ENCODE measurements at regions of chr12 and their contacts with region 1.

Region 1: DNA sequence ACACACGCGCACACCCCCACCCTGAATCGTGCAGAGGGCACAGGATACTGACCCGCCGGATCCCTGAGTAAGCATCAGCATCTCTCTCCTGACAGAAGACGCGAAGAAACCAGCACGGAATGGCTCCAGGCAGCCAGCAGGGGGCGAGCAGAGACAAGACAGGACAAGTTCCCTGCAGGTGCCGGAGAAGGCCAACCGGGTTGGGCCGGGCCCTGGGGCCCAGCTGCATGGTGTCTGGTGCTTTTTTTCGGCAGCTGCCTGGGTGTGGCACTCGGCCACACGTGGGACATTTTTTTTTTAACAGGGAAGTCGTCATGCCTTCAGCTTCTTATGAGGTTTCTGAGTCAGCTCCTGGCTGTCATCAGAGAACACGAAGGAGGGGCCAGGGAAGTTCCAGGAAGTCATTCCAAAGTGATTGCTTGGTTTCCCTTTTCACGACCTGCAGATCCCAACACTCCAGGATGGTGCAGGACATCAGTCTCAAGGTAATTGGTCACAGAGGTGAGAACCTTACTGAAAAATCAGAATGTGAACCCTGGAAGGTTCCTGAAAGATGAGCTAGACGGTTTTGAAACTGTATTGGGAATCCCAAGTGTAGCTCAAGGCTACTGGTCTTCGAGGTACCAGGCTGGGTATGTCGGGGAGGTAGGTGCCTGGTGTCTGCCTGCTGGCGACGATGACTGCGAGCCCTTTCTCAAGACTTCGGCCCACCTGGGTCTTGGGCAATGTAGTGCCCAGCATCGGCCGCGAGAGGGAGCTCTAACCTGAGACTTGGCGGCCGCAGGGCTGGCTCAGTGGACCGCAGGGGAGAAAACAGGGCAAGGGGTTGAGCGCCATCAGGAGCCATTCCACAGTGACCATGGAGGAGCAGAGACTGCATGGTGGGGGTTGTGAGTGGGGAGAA is 190.8 kb upstream of the PRMT8 start:
- DNase-seq: peak; percentile 95
- H3K4me3 ChIP-seq: peak overlapping the region in 1 of 4 donors; percentile 9
- H3K27ac ChIP-seq: peak overlapping the region in 1 of 4 donors; percentile 54
- H3K4me1 ChIP-seq: peaks cover 0 to 11% (median 10%) of the 10 kb centered on the region in 4 donors
- H3K27me3 ChIP-seq: peaks cover 0 to 37% (median 0%) of the 10 kb centered on the region in 3 donors
- CTCF ChIP-seq: peak; percentile 87 to 92 (median 88)
- EP300 ChIP-seq: no peak
- POLR2A ChIP-seq: no peak

Region 2: GRCh38 chr12:2520722-2521246 is 779.4 kb before region 1 on chr12:
- intact Hi-C with region 1: no loop called
- DNase-seq: no peak
- H3K4me3 ChIP-seq: no peak overlapping the region
- H3K27ac ChIP-seq: no peak overlapping the region
- H3K4me1 ChIP-seq: no peaks in the 10 kb centered on the region
- H3K27me3 ChIP-seq: no peaks in the 10 kb centered on the region
- CTCF ChIP-seq: no peak
- EP300 ChIP-seq: no peak
- POLR2A ChIP-seq: no peak

Region 3: DNA sequence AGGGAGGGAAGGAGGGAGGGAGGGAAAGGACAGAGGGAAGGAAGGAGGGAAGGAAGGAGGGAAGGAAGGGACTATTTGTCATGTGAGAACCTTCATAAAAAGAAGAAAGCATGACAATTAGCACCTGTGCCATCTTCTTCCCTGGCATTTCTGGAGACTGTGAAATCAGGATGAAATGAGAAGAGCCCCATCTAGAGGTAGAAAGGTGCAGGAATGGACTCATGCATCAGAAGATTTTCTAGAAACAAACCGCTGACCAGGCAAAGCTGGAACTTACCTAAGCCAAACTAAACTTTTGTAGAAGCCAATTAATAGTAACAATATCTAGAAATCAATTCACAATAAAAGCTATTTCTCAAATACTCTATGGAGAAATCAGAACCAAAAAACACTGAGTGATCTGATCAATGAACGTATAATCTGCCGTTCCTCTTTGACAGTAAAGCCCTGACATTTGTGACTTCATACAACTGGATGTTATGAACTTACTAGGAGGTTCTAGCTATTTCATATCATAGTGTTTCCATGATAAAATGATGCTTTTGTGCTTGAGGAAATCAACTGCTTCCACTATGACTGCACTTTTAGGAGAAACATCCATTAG is 477.1 kb after region 1 on chr12:
- intact Hi-C with region 1: loop called (anchors 1 kb)
- DNase-seq: no peak
- H3K4me3 ChIP-seq: no peak overlapping the region
- H3K27ac ChIP-seq: no peak overlapping the region
- H3K4me1 ChIP-seq: no peaks in the 10 kb centered on the region
- H3K27me3 ChIP-seq: no peaks in the 10 kb centered on the region
- CTCF ChIP-seq: peak; percentile 34 to 68 (median 58)
- EP300 ChIP-seq: no peak
- POLR2A ChIP-seq: no peak

Region 4: DNA sequence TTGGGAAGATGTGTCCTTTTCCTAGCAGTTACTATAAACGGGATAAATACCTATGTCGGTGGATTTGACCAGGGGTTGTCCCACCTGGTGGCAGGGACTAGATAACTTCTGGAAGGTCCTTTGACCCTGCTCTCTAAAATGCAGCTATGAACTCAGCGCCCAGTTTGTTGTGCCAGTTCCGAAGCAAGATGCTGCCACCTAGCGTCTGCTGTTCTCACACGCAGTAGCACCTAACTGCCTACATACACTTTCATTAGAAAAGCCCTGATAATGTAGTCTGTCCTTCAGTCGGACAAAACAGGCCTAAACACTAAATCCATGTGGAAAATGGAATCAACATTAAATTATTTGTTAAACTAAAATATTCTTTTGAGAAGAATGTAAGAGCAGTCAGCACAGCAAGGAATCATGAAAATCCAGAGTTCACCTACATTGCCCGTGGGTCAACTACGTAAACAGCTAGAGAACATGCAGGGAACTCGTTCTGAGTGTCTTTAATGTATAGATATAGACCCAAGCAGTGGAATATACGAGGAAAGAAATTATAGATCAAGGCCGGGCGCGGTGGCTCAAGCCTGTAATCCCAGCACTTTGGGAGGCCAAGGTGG is 503.8 kb after region 1 on chr12:
- intact Hi-C with region 1: loop called (anchors 1 kb)
- DNase-seq: peak; percentile 81
- H3K4me3 ChIP-seq: no peak overlapping the region
- H3K27ac ChIP-seq: no peak overlapping the region
- H3K4me1 ChIP-seq: no peaks in the 10 kb centered on the region
- H3K27me3 ChIP-seq: no peaks in the 10 kb centered on the region
- CTCF ChIP-seq: peak; percentile 50 to 79 (median 75)
- EP300 ChIP-seq: no peak
- POLR2A ChIP-seq: no peak

Measured in sigmoid colon (tissue), 7 donors.